ENCODE measurements at regions of chr11 and their contacts with region 1.

Region 1: DNA sequence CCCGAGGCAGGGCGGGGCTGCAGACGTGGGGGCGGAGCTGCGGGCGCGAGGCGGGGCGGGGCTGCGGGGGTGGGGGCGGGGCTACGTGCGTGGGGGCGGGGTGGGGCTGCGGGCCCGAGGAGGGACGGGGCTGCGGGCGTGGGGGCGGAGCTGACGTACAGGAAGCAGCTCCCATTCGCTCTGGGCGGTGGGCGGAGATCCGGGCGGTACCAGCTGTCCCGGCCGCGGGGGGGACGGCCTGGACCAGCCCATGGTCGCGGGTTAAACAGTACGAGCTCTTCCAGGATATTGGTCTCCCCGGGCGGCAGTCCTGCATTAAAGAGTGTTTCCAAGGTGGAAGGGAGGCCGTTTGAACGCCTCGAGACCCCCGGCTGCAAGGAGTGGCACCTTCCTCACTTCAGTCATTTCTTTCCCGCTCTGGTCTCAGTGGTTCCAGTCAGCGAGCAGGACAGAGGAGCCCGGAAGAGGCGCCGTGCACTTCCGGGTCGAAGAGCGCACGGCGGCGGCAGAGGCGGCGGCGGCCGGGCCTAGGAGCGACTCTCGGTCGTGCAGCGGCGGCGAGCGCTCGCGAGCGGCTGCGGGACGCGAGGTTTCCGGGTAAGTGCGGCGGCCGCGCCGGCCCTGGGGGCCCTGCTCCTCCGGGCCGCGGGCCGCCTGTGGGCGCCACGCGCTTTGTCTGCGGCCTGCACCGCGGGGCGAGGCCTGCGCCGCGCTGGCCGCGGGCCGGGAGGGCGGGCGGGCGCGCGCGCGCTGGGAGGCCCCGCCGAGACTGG is at the start of gene PHRF1:
- DNase-seq: peak; percentile 75 to 96
- H3K4me3 ChIP-seq: peak within 1 kb of the TSS; percentile 87 to 99 (median 88)
- H3K27ac ChIP-seq: peak within 1 kb of the TSS; percentile 100
- H3K4me1 ChIP-seq: peaks cover 6 to 25% (median 15%) of the 10 kb centered on the region in 4 experiments
- H3K27me3 ChIP-seq: peaks cover 8 to 17% (median 13%) of the 10 kb centered on the region in 4 experiments
- CTCF ChIP-seq: no peak
- EP300 ChIP-seq: peak in 1 of 2 experiments; percentile 99; a peak in 2 of 3 replicates
- POLR2A ChIP-seq: peak in 1 of 2 experiments; percentile 92; a peak in 2 of 3 replicates
- RAD21 ChIP-seq: no peak; a peak in 1 of 4 replicates
- total RNA-seq, gene PHRF1: 37.3 and 39.8 TPM in 2 replicates

Region 2: GRCh38 chr11:241634-242033 is 334.5 kb before region 1 on chr11:
- CTCF ChIA-PET with region 1: no interaction called
- POLR2A ChIA-PET with region 1: no interaction called
- DNase-seq: no peak
- H3K4me3 ChIP-seq: no peak overlapping the region
- H3K27ac ChIP-seq: no peak overlapping the region
- H3K4me1 ChIP-seq: no peaks in the 10 kb centered on the region; a peak in 1 of 7 replicates
- H3K27me3 ChIP-seq: no peaks in the 10 kb centered on the region
- CTCF ChIP-seq: no peak
- EP300 ChIP-seq: no peak
- POLR2A ChIP-seq: no peak
- RAD21 ChIP-seq: no peak

Region 3: GRCh38 chr11:535519-536454 is 40.4 kb before region 1 on chr11 and contains the start of gene HRAS:
- CTCF ChIA-PET with region 1: no interaction called
- POLR2A ChIA-PET with region 1: interaction called, 11 read pairs
- DNase-seq: peak; percentile 70 to 94
- H3K4me3 ChIP-seq: peak within 1 kb of the TSS; percentile 67 to 81 (median 74)
- H3K27ac ChIP-seq: 0 out of 2 replicates have a peak within 1 kb of the TSS, but pooled peaks have one; percentile 30
- H3K4me1 ChIP-seq: peaks cover 0 to 19% (median 10%) of the 10 kb centered on the region in 4 experiments; a peak in 5 of 7 replicates
- H3K27me3 ChIP-seq: peaks cover 0 to 16% (median 6%) of the 10 kb centered on the region in 4 experiments; a peak in 5 of 7 replicates
- CTCF ChIP-seq: peak in 1 of 3 experiments; percentile 20; a peak in 1 of 4 replicates
- EP300 ChIP-seq: no peak
- POLR2A ChIP-seq: peak in 1 of 2 experiments; percentile 51; a peak in 1 of 3 replicates
- RAD21 ChIP-seq: no peak
- total RNA-seq, gene HRAS: 54.7 and 60.9 TPM in 2 replicates

Region 4: GRCh38 chr11:560305-561147 is 15.7 kb before region 1 on chr11 and contains the starts of genes LMNTD2 and RASSF7:
- CTCF ChIA-PET with region 1: interaction called, 6 read pairs
- POLR2A ChIA-PET with region 1: interaction called, 15 read pairs
- DNase-seq: peak; percentile 73 to 98
- H3K4me3 ChIP-seq: peak within 1 kb of the TSS; percentile 63 to 95 (median 77)
- H3K27ac ChIP-seq: no peak within 1 kb of the TSS; the same call in 1 of the 2 replicates
- H3K4me1 ChIP-seq: peaks cover 0 to 32% (median 12%) of the 10 kb centered on the region in 4 experiments; a peak in 6 of 7 replicates
- H3K27me3 ChIP-seq: peaks cover 13 to 28% (median 25%) of the 10 kb centered on the region in 4 experiments
- CTCF ChIP-seq: no peak
- EP300 ChIP-seq: no peak
- POLR2A ChIP-seq: 0 out of 3 replicates have a peak, but pooled peaks of 1 of the 2 experiments have one; percentile 12
- RAD21 ChIP-seq: no peak
- total RNA-seq, gene LMNTD2: 2.6 and 3.1 TPM in 2 replicates
- total RNA-seq, gene RASSF7: 20.6 and 22.3 TPM in 2 replicates

Region 5: GRCh38 chr11:590997-591396 is 14.8 kb after region 1 on chr11:
- CTCF ChIA-PET with region 1: interaction called, 11 read pairs
- POLR2A ChIA-PET with region 1: interaction called, 9 read pairs
- DNase-seq: no peak
- H3K4me3 ChIP-seq: no peak overlapping the region
- H3K27ac ChIP-seq: no peak overlapping the region
- H3K4me1 ChIP-seq: no peaks in the 10 kb centered on the region
- H3K27me3 ChIP-seq: no peaks in the 10 kb centered on the region
- CTCF ChIP-seq: no peak
- EP300 ChIP-seq: no peak
- POLR2A ChIP-seq: no peak
- RAD21 ChIP-seq: no peak

Measured in H1 (cell line).